ENCODE measurements at regions of chr13 and their contacts with region 1.

Region 1: DNA sequence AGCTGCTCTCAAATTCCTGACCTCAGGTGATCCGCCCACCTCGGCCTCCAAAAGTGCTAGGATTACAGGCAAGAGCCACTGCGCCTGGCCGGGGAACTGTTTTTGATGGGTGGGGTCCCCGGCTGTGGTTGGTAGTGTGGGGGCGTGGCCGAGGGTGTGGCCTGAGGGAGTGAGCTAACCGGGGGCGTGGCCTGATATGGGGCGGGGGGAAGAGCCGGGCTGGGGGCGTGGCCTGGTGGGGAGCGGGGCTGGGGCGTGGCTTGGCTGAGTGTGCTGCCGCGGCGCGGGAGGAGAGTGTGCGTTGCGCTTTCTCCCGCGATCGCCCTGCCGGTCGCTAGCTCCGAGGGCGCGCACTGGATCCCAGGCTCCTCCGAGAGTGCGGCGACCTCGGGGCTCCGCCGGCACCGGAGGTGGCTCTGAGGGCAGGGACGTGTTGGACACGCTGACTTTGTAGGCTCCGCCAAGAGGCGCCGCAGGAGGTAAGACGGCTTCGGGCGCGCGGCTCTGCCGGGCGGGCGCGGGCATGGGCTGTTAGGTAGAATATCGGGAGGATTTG is at the start of gene SPATA13:
- DNase-seq: peak; percentile 92 to 96 (median 93)
- ATAC-seq: peak; percentile 96 to 99 (median 98)
- H3K4me3 ChIP-seq: peak within 1 kb of the TSS; percentile 62 to 91 (median 82)
- H3K27ac ChIP-seq: peak within 1 kb of the TSS; percentile 50 to 85 (median 70)
- H3K4me1 ChIP-seq: peaks cover 0 to 27% (median 6%) of the 10 kb centered on the region in 12 donors
- H3K27me3 ChIP-seq: peaks cover 0 to 11% (median 0%) of the 10 kb centered on the region in 9 donors
- CTCF ChIP-seq: peak in 1 of 12 donors; percentile 6
- POLR2A ChIP-seq: peak in 1 of 2 donors; percentile 67
- total RNA-seq, gene SPATA13: 7.1 to 20.1 (median 9.3) TPM

Region 2: GRCh38 chr13:24053519-24054251 is 106.8 kb before region 1 on chr13:
- intact Hi-C with region 1: loop called in 5 of 10 experiments (anchors 5 to 10 kb)
- DNase-seq: peak in 2 of 5 donors; percentile 39 to 40
- ATAC-seq: peak; percentile 56 to 84 (median 76)
- H3K4me3 ChIP-seq: peak overlapping the region in 4 of 12 donors; percentile 3 to 32 (median 20)
- H3K27ac ChIP-seq: peak overlapping the region; percentile 11 to 78 (median 54)
- H3K4me1 ChIP-seq: peaks cover 0 to 35% (median 17%) of the 10 kb centered on the region in 12 donors
- H3K27me3 ChIP-seq: no peaks in the 10 kb centered on the region
- CTCF ChIP-seq: peak; percentile 55 to 74 (median 66)
- POLR2A ChIP-seq: no peak

Region 3: GRCh38 chr13:24063281-24063877 is 97.2 kb before region 1 on chr13:
- intact Hi-C with region 1: loop called in 6 of 10 experiments (anchors 5 to 10 kb)
- DNase-seq: peak in 4 of 5 donors; percentile 53 to 76 (median 72)
- ATAC-seq: peak; percentile 68 to 95 (median 74)
- H3K4me3 ChIP-seq: peak overlapping the region in 4 of 12 donors; percentile 2 to 28 (median 14)
- H3K27ac ChIP-seq: peak overlapping the region in 11 of 12 donors; percentile 56 to 88 (median 75)
- H3K4me1 ChIP-seq: peaks cover 0 to 35% (median 10%) of the 10 kb centered on the region in 12 donors
- H3K27me3 ChIP-seq: peaks cover 0 to 7% (median 0%) of the 10 kb centered on the region in 9 donors
- CTCF ChIP-seq: no peak
- POLR2A ChIP-seq: no peak

Region 4: DNA sequence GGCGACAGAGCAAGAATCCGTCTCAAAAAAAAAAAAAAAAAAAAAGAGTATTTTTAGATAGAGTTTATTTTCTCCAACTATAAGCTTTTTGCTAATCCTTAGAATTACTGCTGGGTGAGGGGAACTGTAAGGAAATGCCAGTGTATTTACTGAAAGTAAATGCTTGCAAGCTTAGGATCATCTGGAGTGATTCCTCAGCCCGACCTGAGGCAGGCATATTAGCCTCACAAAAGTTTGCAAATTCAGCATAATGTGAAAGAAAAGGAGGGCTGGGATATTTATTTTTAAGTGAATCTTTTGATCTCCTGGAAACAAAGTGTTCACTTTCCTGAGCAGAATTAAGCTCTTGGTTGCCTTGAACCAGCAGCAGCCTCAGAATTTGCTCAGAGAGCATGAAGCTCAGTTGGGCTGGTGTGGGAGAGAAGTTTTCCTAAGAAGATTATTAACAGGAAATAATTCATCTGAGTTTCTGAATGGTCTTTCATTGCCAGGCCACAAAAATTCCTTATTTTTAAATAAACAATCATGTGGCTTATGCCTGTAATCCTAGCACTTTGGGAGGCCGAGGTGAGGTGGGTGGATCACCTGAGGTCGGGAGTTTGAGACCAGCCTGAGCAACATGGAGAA is 24.7 kb before region 1 on chr13:
- intact Hi-C with region 1: no loop called
- DNase-seq: no peak
- ATAC-seq: no peak
- H3K4me3 ChIP-seq: no peak overlapping the region
- H3K27ac ChIP-seq: no peak overlapping the region
- H3K4me1 ChIP-seq: no peaks in the 10 kb centered on the region
- H3K27me3 ChIP-seq: no peaks in the 10 kb centered on the region
- CTCF ChIP-seq: no peak
- POLR2A ChIP-seq: no peak

Region 5: GRCh38 chr13:24203811-24204210 is 43.3 kb after region 1 on chr13:
- intact Hi-C with region 1: loop called in 1 of 10 experiments (anchors 5 kb)
- DNase-seq: no peak
- ATAC-seq: peak in 1 of 4 donors; percentile 66
- H3K4me3 ChIP-seq: no peak overlapping the region
- H3K27ac ChIP-seq: peak overlapping the region in 2 of 12 donors; percentile 8 to 30
- H3K4me1 ChIP-seq: peaks cover 0 to 28% (median 5%) of the 10 kb centered on the region in 12 donors
- H3K27me3 ChIP-seq: no peaks in the 10 kb centered on the region
- CTCF ChIP-seq: no peak
- POLR2A ChIP-seq: no peak